Mammary epithelial cell (primary cell): ENCODE measurements at regions of chr5 and their contacts with region 1.

Region 1: GRCh38 chr5:18281682-18282557 is 647.7 kb downstream of the TAF11L14 start:
- DNase-seq: peak; percentile 55
- H3K4me3 ChIP-seq: no peak overlapping the region
- H3K27ac ChIP-seq: no peak overlapping the region
- H3K4me1 ChIP-seq: no peaks in the 10 kb centered on the region
- H3K27me3 ChIP-seq: no peaks in the 10 kb centered on the region
- CTCF ChIP-seq: peak; percentile 55 to 65

Region 2: GRCh38 chr5:18032744-18033143 is 249.2 kb before region 1 on chr5:
- CTCF ChIA-PET with region 1: no interaction called
- dilution Hi-C with region 1: no loop called
- in situ Hi-C with region 1: no loop called
- intact Hi-C with region 1: loop called (anchors 10 kb)
- DNase-seq: no peak
- H3K4me3 ChIP-seq: no peak overlapping the region
- H3K27ac ChIP-seq: no peak overlapping the region
- H3K4me1 ChIP-seq: no peaks in the 10 kb centered on the region
- H3K27me3 ChIP-seq: no peaks in the 10 kb centered on the region
- CTCF ChIP-seq: no peak

Region 3: GRCh38 chr5:18102733-18103132 is 179.2 kb before region 1 on chr5:
- CTCF ChIA-PET with region 1: no interaction called
- dilution Hi-C with region 1: no loop called
- in situ Hi-C with region 1: no loop called
- intact Hi-C with region 1: loop called (anchors 5 kb)
- DNase-seq: no peak
- H3K4me3 ChIP-seq: no peak overlapping the region
- H3K27ac ChIP-seq: no peak overlapping the region
- H3K4me1 ChIP-seq: no peaks in the 10 kb centered on the region
- H3K27me3 ChIP-seq: no peaks in the 10 kb centered on the region
- CTCF ChIP-seq: no peak

Region 4: DNA sequence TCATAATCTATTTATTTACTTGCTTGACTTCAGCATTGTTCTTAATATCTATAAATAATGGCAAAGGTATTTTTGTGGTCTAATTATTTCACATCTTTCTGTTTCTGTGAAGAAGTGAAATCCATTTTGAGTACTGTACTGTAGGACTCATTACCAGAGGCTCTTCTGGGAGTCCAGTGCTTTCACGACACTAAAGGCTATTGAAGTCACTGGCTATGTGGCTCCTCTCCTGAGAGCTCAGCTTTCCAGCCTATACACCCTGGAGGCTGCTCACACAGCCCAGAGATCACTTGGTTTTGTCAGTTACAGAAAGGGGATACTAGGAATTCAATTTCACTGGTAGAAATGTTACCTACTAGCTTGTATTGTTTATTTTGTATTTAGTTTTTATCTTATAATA is 100.3 kb before region 1 on chr5:
- CTCF ChIA-PET with region 1: interaction called, 10 read pairs
- dilution Hi-C with region 1: no loop called
- in situ Hi-C with region 1: no loop called
- intact Hi-C with region 1: no loop called
- DNase-seq: no peak
- H3K4me3 ChIP-seq: no peak overlapping the region
- H3K27ac ChIP-seq: no peak overlapping the region
- H3K4me1 ChIP-seq: no peaks in the 10 kb centered on the region
- H3K27me3 ChIP-seq: no peaks in the 10 kb centered on the region
- CTCF ChIP-seq: no peak

Region 5: GRCh38 chr5:18299166-18299565 is 17.2 kb after region 1 on chr5:
- CTCF ChIA-PET with region 1: interaction called, 26 read pairs
- dilution Hi-C with region 1: no loop called
- in situ Hi-C with region 1: no loop called
- intact Hi-C with region 1: no loop called
- DNase-seq: no peak
- H3K4me3 ChIP-seq: no peak overlapping the region
- H3K27ac ChIP-seq: no peak overlapping the region
- H3K4me1 ChIP-seq: no peaks in the 10 kb centered on the region
- H3K27me3 ChIP-seq: no peaks in the 10 kb centered on the region
- CTCF ChIP-seq: no peak

Region 6: GRCh38 chr5:18305297-18305924 is 23.5 kb after region 1 on chr5:
- CTCF ChIA-PET with region 1: interaction called, 6 read pairs
- dilution Hi-C with region 1: no loop called
- in situ Hi-C with region 1: no loop called
- intact Hi-C with region 1: loop called (anchors 1 kb)
- DNase-seq: no peak
- H3K4me3 ChIP-seq: no peak overlapping the region
- H3K27ac ChIP-seq: no peak overlapping the region
- H3K4me1 ChIP-seq: no peaks in the 10 kb centered on the region
- H3K27me3 ChIP-seq: no peaks in the 10 kb centered on the region
- CTCF ChIP-seq: peak; percentile 88 to 89